Activated CD4-positive, alpha-beta T cell treated with anti-CD3 and anti-CD28 coated beads for 36 hours (primary cell): ENCODE measurements at regions of chr15 and their contacts with region 1.

Region 1: GRCh38 chr15:24878153-24878552 is 76.6 kb upstream of the SNRPN start:
- DNase-seq: peak; percentile 14
- ATAC-seq: no peak
- H3K4me3 Mint-ChIP-seq: no peak overlapping the region
- H3K27ac Mint-ChIP-seq: no peak overlapping the region
- H3K4me1 Mint-ChIP-seq: no peaks in the 10 kb centered on the region
- H3K27me3 Mint-ChIP-seq: peaks cover 2% of the 10 kb centered on the region

Region 2: GRCh38 chr15:24823473-24823872 is 54.7 kb before region 1 on chr15:
- CTCF ChIA-PET with region 1: no interaction called
- POLR2A ChIA-PET with region 1: no interaction called
- intact Hi-C with region 1: loop called in 1 of 2 experiments (anchors 10 kb)
- DNase-seq: peak; percentile 4
- ATAC-seq: no peak
- H3K4me3 Mint-ChIP-seq: no peak overlapping the region
- H3K27ac Mint-ChIP-seq: no peak overlapping the region
- H3K4me1 Mint-ChIP-seq: no peaks in the 10 kb centered on the region
- H3K27me3 Mint-ChIP-seq: no peaks in the 10 kb centered on the region

Region 3: DNA sequence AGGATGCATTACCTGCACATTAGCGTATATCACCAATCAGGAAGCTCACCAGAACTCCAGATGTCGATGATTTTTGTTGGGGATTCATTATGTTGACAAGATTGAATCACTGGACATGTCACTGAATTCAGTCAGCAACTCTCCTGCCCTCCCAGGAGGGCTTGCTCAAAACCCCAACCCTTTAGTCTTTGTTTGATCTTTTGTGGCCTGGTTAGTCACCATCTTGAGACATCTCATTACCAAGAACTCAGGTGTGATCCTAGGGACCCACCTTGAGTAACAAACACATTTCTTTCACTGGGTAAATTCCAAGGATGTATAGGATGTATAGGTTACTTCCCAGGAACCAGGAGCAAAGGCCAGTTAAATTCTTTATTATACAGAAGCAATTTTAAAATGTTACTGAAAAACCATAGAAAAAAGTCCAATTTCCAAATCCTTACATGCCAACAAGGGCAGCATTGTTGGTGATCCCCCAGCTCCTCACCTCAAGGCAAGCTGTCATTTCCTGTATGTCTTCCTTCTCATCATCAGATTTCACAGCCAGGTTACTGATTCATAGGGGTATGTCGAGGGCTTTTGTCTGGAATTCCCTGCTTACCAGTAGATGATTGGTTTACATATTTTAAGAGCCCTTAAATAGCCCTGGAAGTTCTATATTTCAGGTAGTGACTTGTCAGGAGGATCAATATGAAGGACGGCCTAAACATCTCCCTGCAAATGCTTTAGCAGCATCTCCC is 88.4 kb after region 1 on chr15:
- CTCF ChIA-PET with region 1: no interaction called
- POLR2A ChIA-PET with region 1: no interaction called
- intact Hi-C with region 1: no loop called
- DNase-seq: no peak
- ATAC-seq: peak; percentile 44
- H3K4me3 Mint-ChIP-seq: no peak overlapping the region
- H3K27ac Mint-ChIP-seq: no peak overlapping the region
- H3K4me1 Mint-ChIP-seq: no peaks in the 10 kb centered on the region
- H3K27me3 Mint-ChIP-seq: no peaks in the 10 kb centered on the region